Colonic mucosa (tissue), 4 donors: ENCODE measurements at regions of chr6 and their contacts with region 1.

Region 1: GRCh38 chr6:100116411-100117194 is 122.6 kb upstream of the MCHR2 start:
- DNase-seq: peak; percentile 22
- H3K4me3 ChIP-seq: no peak overlapping the region
- H3K27ac ChIP-seq: no peak overlapping the region
- H3K4me1 ChIP-seq: no peaks in the 10 kb centered on the region
- H3K27me3 ChIP-seq: no peaks in the 10 kb centered on the region
- CTCF ChIP-seq: peak; percentile 47

Region 2: GRCh38 chr6:100217225-100218012 is 100.8 kb after region 1 on chr6:
- intact Hi-C with region 1: no loop called
- DNase-seq: no peak
- H3K4me3 ChIP-seq: no peak overlapping the region
- H3K27ac ChIP-seq: no peak overlapping the region
- H3K4me1 ChIP-seq: no peaks in the 10 kb centered on the region
- H3K27me3 ChIP-seq: no peaks in the 10 kb centered on the region
- CTCF ChIP-seq: no peak

Region 3: GRCh38 chr6:100370265-100370664 is 253.7 kb after region 1 on chr6:
- intact Hi-C with region 1: no loop called
- DNase-seq: no peak
- H3K4me3 ChIP-seq: no peak overlapping the region
- H3K27ac ChIP-seq: no peak overlapping the region
- H3K4me1 ChIP-seq: no peaks in the 10 kb centered on the region
- H3K27me3 ChIP-seq: no peaks in the 10 kb centered on the region
- CTCF ChIP-seq: no peak

Region 4: DNA sequence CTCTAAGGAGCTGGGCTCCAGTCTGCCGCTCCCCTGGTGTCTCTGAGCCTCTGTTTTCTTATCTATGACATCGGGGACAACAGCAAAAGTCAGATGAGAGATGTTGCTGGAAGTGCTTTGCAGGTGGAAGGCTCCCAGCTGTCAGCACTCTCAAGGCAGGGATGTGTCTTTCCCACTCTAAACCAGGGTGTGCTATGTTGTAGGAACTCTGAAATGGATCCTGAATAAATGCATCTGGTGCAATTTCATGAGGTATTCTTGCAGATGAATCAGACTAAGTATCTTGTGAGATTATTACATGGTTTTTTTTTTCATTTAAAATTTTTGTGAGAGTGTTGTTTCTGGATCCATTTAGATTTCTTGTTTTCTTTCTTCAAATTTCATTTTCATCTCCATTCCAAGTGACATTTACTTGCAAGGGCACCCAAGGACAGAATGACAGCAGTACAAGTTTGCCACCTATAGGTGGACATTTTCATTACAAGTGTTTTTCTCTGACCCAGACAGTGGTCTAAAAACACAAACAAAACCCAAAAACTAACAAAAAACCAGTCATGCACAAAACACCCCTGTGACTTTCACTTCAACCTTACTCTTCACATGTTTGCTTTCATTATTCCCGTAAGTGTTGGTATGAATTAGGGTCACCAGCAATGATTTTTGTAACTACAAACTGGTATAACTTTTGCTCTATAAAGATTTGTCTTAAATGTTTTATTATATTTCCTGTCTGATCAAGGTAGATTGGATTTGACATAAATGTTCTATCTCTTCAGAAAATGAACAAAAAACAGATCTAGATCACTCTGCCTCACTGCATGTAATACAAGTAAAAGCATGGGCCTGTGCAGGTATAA is 362.8 kb after region 1 on chr6:
- intact Hi-C with region 1: loop called (anchors 2 kb)
- DNase-seq: no peak
- H3K4me3 ChIP-seq: no peak overlapping the region
- H3K27ac ChIP-seq: no peak overlapping the region
- H3K4me1 ChIP-seq: no peaks in the 10 kb centered on the region
- H3K27me3 ChIP-seq: peaks cover 4% of the 10 kb centered on the region
- CTCF ChIP-seq: peak; percentile 59